H1 (cell line): ENCODE measurements at regions of chr7 and their contacts with region 1.

Region 1: DNA sequence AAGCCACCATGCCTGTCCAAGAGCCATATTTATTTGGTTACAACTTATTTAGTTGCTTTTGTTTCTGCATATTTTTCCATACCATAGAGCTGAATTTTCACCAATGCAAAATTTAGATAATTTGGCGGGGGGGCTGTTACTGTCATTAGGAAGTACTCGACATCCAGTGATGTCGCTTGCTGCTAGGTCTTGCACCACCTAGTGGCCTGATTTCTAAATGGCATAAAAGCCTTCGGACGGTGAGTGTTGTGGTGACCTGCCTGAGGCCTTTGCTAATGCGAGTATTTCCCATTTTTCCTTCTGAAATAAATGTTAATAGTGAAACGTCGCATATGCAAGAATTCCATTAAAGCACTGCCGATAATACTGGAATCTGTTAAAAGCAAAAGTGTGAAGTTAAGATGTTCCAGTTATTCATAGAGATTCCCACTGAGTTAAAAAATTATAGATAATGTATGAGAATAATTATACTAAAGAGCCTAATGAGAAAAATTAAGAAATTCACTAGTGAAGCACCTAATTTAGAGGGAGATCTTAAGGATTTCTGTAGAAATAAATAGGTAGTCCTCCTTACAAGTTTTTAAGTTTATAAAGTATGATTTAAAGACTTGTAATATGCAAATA is 86.1 kb upstream of the DNAJB6 start:
- DNase-seq: peak; percentile 31 to 74
- H3K4me3 ChIP-seq: no peak overlapping the region
- H3K27ac ChIP-seq: no peak overlapping the region
- H3K4me1 ChIP-seq: no peaks in the 10 kb centered on the region
- H3K27me3 ChIP-seq: no peaks in the 10 kb centered on the region
- CTCF ChIP-seq: peak; percentile 64 to 85 (median 68)
- EP300 ChIP-seq: no peak
- POLR2A ChIP-seq: no peak
- RAD21 ChIP-seq: peak; percentile 52; a peak in 3 of 4 replicates

Region 2: GRCh38 chr7:156993021-156993924 is 257.4 kb before region 1 on chr7:
- CTCF ChIA-PET with region 1: interaction called, 10 read pairs
- POLR2A ChIA-PET with region 1: no interaction called
- DNase-seq: peak in 1 of 2 experiments; percentile 48
- H3K4me3 ChIP-seq: no peak overlapping the region
- H3K27ac ChIP-seq: no peak overlapping the region
- H3K4me1 ChIP-seq: no peaks in the 10 kb centered on the region; a peak in 2 of 7 replicates
- H3K27me3 ChIP-seq: peaks cover 6 to 23% (median 20%) of the 10 kb centered on the region in 4 experiments
- CTCF ChIP-seq: no peak
- EP300 ChIP-seq: no peak
- POLR2A ChIP-seq: no peak
- RAD21 ChIP-seq: no peak

Region 3: DNA sequence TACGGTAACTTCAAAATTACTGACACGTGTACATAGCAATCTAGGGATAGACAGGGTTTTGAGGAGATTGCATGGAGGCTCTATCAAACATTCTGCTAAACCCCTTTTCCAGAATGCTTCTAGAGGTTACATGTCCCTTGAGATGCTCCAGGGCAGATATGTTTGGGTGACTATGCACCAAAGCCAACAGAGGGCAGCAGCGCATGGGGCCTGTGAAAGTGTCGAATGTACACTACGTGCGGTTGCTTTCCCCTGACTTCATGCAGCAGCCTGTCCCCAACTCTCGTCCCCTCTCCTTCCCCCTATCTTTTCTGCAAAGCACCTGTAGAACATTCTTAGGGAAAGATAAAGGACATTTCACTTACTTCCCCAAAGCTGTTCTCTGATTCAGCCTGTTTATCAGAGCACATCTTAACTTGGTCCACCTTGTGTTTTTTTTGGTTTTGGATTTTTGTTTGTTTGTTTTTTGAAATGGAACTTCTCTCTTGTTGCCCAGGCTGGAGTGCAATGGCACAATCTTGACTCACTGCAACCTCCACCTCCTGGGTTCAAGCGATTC is 21.8 kb before region 1 on chr7:
- CTCF ChIA-PET with region 1: interaction called, 207 read pairs
- POLR2A ChIA-PET with region 1: no interaction called
- DNase-seq: no peak
- H3K4me3 ChIP-seq: no peak overlapping the region
- H3K27ac ChIP-seq: no peak overlapping the region
- H3K4me1 ChIP-seq: no peaks in the 10 kb centered on the region
- H3K27me3 ChIP-seq: no peaks in the 10 kb centered on the region
- CTCF ChIP-seq: peak; percentile 52 to 69 (median 69)
- EP300 ChIP-seq: no peak
- POLR2A ChIP-seq: no peak
- RAD21 ChIP-seq: peak; percentile 53 to 56

Region 4: GRCh38 chr7:157238087-157238486 is 12.6 kb before region 1 on chr7:
- CTCF ChIA-PET with region 1: interaction called, 207 read pairs
- POLR2A ChIA-PET with region 1: interaction called, 3 read pairs
- DNase-seq: peak in 1 of 2 experiments; percentile 68
- H3K4me3 ChIP-seq: no peak overlapping the region
- H3K27ac ChIP-seq: no peak overlapping the region
- H3K4me1 ChIP-seq: no peaks in the 10 kb centered on the region
- H3K27me3 ChIP-seq: no peaks in the 10 kb centered on the region
- CTCF ChIP-seq: peak; percentile 56 to 80 (median 77)
- EP300 ChIP-seq: no peak
- POLR2A ChIP-seq: no peak
- RAD21 ChIP-seq: peak; percentile 44 to 61

Region 5: DNA sequence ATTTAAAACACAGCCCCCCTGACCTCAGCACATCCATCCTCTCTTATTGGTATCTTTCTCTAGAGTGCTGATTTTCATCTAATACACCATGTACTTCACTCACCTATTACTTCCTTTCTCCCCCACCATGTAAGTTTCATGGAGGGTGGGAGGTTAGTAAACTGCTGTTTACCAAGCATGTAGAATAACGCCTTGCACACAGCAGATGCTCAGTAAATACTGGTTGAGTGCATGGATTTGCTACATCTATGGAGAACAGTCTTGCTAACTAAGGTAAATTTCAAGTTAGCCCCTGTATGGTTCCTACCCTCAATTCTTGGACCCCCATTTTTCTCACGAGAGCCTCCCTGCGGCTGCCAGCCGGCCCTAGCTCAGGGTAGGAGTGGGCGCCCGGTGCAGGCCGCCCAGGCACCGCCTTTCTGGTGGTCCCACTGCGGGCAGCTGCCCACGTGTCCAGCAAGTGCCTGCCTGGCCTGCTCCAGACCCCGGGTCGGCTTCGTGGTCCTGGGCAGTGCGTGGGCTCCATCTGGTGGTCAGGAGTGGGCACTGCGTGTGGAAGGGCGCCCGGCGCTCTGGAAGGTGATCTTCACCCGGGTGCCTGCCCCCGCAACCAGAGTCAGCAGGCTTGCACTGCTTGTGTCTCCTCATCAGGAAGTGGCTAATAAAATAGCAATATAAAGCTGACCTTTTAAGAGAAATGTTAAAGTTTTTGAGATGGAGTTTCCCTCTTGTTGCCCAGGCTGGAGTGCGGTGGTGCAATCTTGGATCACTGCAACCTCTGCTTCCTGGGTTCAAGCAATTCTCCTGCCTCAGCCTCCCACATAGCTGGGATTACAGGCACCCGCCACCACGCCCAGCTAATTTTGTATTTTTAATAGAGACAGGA is 22.7 kb after region 1 on chr7:
- CTCF ChIA-PET with region 1: interaction called, 72 read pairs
- POLR2A ChIA-PET with region 1: interaction called, 5 read pairs
- DNase-seq: peak; percentile 72 to 92
- H3K4me3 ChIP-seq: no peak overlapping the region
- H3K27ac ChIP-seq: no peak overlapping the region
- H3K4me1 ChIP-seq: peaks cover 0 to 7% (median 1%) of the 10 kb centered on the region in 4 experiments; a peak in 5 of 7 replicates
- H3K27me3 ChIP-seq: no peaks in the 10 kb centered on the region
- CTCF ChIP-seq: peak in 2 of 3 experiments; percentile 97 to 98; a peak in 3 of 4 replicates
- EP300 ChIP-seq: no peak
- POLR2A ChIP-seq: no peak
- RAD21 ChIP-seq: peak; percentile 98

Region 6: DNA sequence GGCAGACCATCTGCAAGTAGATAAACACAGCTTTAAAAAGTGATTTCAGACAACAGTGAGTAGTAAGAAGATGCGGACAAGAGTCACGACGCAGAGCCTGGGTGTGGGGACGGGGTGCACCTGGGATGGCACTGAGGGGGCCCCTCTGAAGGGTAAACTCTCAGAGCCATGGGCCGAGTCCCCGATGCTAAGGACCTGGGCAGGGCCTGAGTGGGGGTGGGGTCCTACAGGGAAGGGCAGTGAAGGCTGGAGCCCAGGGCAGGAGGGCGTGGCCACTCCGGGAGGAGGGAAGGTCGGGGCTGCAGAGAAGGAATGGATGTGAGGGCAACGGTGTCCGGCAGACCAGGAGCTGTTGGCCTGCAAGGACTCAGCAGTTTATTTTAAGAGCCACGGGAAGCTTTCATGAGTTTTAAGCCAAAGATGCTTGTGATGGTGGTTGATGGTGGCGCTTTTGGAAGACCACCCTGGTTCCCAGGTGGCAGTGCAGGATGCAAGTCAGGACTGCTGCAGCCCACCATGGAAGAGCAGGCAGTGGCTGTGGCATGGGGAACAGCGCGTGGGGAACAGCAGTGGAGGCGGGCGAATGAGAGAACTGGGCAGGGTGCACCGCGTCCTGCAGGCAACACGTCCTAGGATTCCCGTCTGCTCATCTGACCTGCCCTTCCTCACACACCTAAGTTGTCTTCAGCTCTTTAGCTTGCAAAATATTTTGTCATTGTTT is 382.9 kb after region 1 on chr7:
- CTCF ChIA-PET with region 1: no interaction called
- POLR2A ChIA-PET with region 1: no interaction called
- DNase-seq: no peak
- H3K4me3 ChIP-seq: no peak overlapping the region
- H3K27ac ChIP-seq: no peak overlapping the region
- H3K4me1 ChIP-seq: 0 out of 7 replicates have a peak, but pooled peaks cover 0 to 2% (median 0%) of the 10 kb centered on the region in 4 experiments
- H3K27me3 ChIP-seq: no peaks in the 10 kb centered on the region; a peak in 3 of 7 replicates
- CTCF ChIP-seq: no peak
- EP300 ChIP-seq: no peak
- POLR2A ChIP-seq: no peak
- RAD21 ChIP-seq: no peak